HAP-1 (cell line): ENCODE measurements at regions of chr9 and their contacts with region 1.

Region 1: GRCh38 chr9:34603610-34604231 is 8.2 kb downstream of the RPP25L start:
- DNase-seq: peak; percentile 70 to 92
- H3K4me3 ChIP-seq: no peak overlapping the region
- H3K4me1 ChIP-seq: no peaks in the 10 kb centered on the region
- H3K27me3 ChIP-seq: no peaks in the 10 kb centered on the region

Region 2: DNA sequence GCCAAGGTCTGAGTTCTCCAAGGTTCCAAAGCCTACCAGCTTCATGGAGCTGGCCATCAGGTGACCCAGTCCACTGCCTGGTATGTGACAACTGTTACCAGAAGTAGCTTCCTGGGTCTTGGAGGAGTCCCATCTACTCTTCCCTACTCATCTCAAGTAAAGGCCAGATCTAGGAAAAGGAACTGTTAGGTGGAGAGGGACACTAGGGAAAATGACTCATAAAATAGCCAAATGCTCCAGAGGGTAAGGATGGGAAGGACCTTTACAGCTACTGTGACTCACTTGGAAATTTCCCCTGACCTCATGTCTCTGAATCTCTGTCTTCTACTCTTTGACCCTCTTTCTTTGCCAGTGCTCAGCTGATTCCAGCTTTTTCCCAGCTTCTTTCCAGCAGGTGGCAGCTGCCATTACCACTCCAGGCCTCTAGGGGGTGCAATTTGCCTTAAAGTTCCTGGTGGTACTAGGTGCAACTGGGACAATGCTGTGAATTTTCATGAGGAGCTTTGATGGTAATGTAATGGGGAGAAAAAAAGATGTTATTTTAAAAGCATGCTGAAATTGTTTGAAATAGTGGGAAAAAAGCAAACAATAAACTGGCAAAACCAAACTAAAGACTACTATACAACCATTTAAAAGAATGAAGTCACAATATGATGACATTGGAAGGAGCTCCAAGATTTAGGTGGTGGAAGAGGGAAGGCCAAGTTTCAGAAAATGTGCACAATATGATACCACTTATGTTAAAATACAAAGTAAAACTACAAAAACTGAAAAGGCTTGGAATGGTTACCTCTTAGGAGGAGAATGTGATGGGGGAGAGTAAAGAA is 200.0 kb before region 1 on chr9:
- in situ Hi-C with region 1: loop called (anchors 5 kb)
- DNase-seq: peak; percentile 60 to 86
- H3K4me3 ChIP-seq: no peak overlapping the region
- H3K4me1 ChIP-seq: no peaks in the 10 kb centered on the region
- H3K27me3 ChIP-seq: no peaks in the 10 kb centered on the region